HAP-1 (cell line): ENCODE measurements at regions of chr3 and their contacts with region 1.

Region 1: DNA sequence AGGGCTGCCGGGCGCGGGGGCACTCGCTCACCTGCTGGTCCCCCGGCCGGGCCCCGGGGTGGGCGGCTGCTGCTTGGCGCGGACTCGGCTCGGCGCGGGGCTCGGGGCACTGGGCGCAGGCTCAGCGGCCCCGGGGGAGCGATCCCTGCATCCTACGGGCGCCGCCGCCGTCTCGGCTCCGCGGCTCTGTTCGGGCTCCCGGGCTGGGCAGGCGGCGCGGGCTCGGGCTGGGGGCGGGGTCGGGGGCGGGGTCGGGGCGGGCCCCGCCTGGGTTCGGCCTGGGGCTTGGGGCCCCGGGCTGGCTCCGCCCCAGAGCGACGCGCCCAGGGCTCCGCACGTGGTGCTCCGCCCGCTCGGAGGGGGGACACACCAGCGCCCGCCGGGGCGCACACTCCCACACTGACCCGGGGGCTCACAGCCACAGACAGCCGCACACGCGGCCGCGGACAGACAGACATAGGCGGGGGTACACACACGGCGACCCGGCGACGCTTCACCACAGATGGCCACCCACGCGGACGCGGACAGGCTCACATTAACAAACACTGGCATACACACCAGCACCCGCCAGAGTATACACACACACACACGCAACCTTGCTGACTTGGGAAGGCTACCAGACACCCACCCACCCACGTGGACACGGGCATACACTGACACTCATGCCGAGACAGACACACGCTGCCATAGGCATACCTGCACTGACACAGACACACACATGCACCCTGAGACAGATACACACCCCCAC is at the start of gene SCN5A:
- DNase-seq: peak; percentile 36 to 75
- H3K4me3 ChIP-seq: peak within 1 kb of the TSS; percentile 72
- H3K4me1 ChIP-seq: peaks cover 7% of the 10 kb centered on the region
- H3K27me3 ChIP-seq: no peaks in the 10 kb centered on the region

Region 2: GRCh38 chr3:38521391-38521987 is 128.2 kb before region 1 on chr3:
- in situ Hi-C with region 1: loop called (anchors 5 kb)
- DNase-seq: peak; percentile 73 to 80
- H3K4me3 ChIP-seq: no peak overlapping the region
- H3K4me1 ChIP-seq: peaks cover 11% of the 10 kb centered on the region
- H3K27me3 ChIP-seq: no peaks in the 10 kb centered on the region